ENCODE measurements at regions of chr15 and their contacts with region 1.

Region 1: GRCh38 chr15:42404461-42405235 is 45.3 kb downstream of the CAPN3 start:
- DNase-seq: no peak
- H3K4me3 ChIP-seq: no peak overlapping the region
- CTCF ChIP-seq: no peak

Region 2: GRCh38 chr15:42367041-42367440 is 37.6 kb before region 1 on chr15:
- in situ Hi-C with region 1: loop called (anchors 5 kb)
- DNase-seq: no peak
- H3K4me3 ChIP-seq: no peak overlapping the region
- CTCF ChIP-seq: no peak

Region 3: DNA sequence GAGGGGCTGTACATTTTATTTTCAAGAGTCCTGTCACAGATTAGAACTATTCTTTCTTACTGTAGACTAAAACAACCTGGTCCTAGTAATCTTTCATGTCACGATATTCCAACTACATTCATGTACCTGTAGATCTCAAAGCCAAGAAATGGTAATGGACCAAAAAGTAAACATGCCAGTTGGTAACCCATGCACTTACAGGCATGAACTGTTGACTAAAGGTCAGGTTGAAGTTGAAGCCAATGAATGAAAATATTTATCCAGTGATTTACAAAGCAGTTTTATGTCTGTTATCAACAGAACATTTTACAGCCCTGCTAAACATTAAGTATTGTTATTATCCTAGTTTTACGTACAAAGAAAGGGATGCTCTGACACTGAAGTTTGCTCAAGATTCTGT is 118.7 kb after region 1 on chr15:
- in situ Hi-C with region 1: no loop called
- DNase-seq: no peak
- H3K4me3 ChIP-seq: no peak overlapping the region
- CTCF ChIP-seq: no peak